Activated T-helper 2 cell treated with anti-CD3 and anti-CD28 coated beads, Interferon-gamma antibody, Interleukin-2, Interleukin-4, amounts not matched to agents 10 μg/mL and 5 μg/mL and 100 μg/mL, durations not matched to agents 14 hours and 24 hours and 36 hours (primary cell): ENCODE measurements at regions of chr18 and their contacts with region 1.

Region 1: GRCh38 chr18:23967321-23968089 is 47.0 kb upstream of the TTC39C start:
- DNase-seq: no peak
- H3K4me3 Mint-ChIP-seq: no peak overlapping the region
- H3K27ac Mint-ChIP-seq: no peak overlapping the region
- H3K4me1 Mint-ChIP-seq: peaks cover 45% of the 10 kb centered on the region
- H3K27me3 Mint-ChIP-seq: peaks cover 23% of the 10 kb centered on the region

Region 2: DNA sequence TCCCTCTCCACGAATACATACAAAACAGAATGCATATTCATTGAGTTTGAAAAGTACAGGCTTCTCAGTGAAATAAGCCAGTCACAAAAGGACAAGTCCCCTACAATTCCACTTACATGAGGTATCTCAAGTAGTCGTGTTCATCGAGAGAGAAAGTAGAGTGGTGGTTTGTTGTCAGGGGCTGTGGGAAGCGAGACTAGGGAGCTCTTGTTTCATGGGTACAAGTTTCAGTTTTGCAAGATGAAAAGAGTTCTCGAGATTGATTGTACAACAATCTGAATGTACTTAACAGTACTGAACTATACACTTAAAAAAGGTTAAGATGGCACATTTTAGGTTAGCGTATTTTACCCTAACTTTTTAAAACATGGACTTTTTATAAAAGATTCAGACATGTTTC is 24.4 kb before region 1 on chr18:
- intact Hi-C with region 1: loop called (anchors 2 kb)
- DNase-seq: peak; percentile 39
- H3K4me3 Mint-ChIP-seq: peak overlapping the region; percentile 47
- H3K27ac Mint-ChIP-seq: peak overlapping the region; percentile 1
- H3K4me1 Mint-ChIP-seq: peaks cover 40% of the 10 kb centered on the region
- H3K27me3 Mint-ChIP-seq: peaks cover 48% of the 10 kb centered on the region

Region 3: GRCh38 chr18:23992089-23992940 is 24.8 kb after region 1 on chr18:
- intact Hi-C with region 1: loop called (anchors 2 kb)
- DNase-seq: peak; percentile 20
- H3K4me3 Mint-ChIP-seq: peak overlapping the region; percentile 15
- H3K27ac Mint-ChIP-seq: peak overlapping the region; percentile 28
- H3K4me1 Mint-ChIP-seq: peaks cover 42% of the 10 kb centered on the region
- H3K27me3 Mint-ChIP-seq: peaks cover 39% of the 10 kb centered on the region

Region 4: DNA sequence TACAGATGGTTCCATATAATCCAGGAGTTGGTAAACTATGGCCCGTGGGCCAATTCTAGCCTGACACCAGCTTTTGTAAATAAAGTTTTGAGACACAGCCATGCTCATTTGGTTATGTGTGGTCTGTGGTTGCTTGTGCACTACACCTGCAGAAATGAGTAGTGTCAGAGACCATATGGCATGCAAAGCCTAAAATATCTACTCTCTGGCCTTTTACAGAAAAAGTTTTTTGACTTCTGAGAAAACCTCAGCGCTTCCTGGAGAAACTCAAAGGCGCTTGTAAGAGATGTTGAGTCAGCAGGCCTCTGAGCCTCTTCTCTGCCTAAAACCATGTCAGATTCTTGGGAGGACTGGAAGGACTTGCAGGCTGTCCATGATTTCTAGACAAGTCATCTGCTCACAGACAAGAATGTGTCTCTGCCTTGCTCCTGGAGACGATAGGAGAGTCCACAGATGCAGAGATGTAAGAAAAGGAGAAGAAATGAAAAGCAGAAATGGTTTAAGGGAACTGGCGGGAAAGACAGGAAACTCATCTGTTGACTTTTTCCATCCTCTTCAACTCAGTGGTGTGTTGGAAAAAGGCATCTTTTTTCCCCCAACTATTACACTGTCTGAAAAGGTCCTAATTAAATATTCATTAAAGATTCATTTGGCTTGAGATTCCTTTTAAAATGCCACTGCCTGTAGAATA is 52.3 kb after region 1 on chr18:
- intact Hi-C with region 1: loop called (anchors 2 kb)
- DNase-seq: peak; percentile 64
- H3K4me3 Mint-ChIP-seq: peak overlapping the region; percentile 67
- H3K27ac Mint-ChIP-seq: peak overlapping the region; percentile 90
- H3K4me1 Mint-ChIP-seq: peaks cover 78% of the 10 kb centered on the region
- H3K27me3 Mint-ChIP-seq: no peaks in the 10 kb centered on the region

Region 5: GRCh38 chr18:24051031-24051947 is 83.8 kb after region 1 on chr18:
- intact Hi-C with region 1: loop called (anchors 2 kb)
- DNase-seq: no peak
- H3K4me3 Mint-ChIP-seq: peak overlapping the region; percentile 33
- H3K27ac Mint-ChIP-seq: peak overlapping the region; percentile 80
- H3K4me1 Mint-ChIP-seq: peaks cover 62% of the 10 kb centered on the region
- H3K27me3 Mint-ChIP-seq: no peaks in the 10 kb centered on the region

Region 6: DNA sequence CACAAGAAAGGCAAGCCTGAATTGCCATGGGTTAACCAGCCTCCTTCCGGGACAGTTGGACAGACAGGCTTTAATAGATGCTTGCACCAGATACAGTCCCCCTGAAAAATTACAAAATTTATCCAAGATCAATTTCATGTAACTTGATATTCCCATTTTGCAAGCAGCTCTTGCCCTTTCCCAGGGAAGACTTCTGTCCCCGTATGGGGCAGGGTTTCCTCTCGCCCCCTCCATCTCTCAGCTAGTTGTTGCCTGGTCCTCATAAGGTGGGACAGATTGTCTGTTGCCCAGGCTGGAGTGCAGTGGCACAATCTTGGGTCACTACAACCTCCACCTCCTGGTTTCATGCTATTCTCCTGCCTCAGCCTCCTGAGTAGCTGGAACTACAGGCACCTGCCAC is 108.2 kb after region 1 on chr18:
- intact Hi-C with region 1: loop called (anchors 5 kb)
- DNase-seq: no peak
- H3K4me3 Mint-ChIP-seq: no peak overlapping the region
- H3K27ac Mint-ChIP-seq: peak overlapping the region; percentile 77
- H3K4me1 Mint-ChIP-seq: peaks cover 32% of the 10 kb centered on the region
- H3K27me3 Mint-ChIP-seq: no peaks in the 10 kb centered on the region